ENCODE measurements at regions of chr16 and their contacts with region 1.

Region 1: DNA sequence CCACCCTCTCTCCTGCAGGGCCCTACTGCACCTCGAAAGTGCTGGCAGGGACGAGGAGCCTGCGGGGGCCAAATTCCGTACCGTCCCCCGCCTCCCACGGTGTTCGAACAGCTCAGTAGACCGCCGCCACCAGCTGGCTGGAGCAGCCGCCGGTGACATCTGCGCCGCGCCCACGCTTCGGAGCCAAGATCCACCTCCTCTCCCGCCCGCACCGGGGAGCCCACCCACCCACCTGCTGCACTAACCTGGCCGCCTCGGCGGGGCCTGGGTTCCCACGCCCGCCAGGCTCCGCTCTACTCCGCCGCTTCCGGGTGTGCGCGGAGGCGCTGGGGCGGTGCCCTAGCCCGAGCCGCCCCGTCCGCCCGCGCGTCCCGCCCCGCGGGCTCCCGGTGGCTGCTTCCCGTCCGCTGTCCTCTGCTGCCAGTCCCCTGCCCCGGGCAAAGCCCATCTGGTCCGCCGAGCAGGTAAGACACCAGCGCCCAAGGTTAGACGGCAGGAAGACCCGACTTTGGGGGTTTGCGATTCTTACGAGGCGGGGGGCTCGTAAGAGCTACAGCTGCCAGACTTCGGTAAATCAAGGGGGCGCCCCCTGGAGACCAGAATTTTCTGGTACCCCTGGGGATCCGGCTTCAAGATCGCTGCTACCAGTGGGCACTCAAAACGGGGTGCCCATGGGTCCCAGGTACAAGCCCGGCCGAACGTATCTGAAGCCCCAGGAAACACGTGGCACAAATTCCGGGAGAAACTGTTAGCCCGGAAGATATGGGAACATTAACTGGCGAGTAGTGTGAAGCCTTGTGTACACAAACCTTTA is at the starts of genes FBXL8 and TRADD:
- DNase-seq: peak; percentile 53 to 90 (median 76)
- ATAC-seq: peak; percentile 69
- H3K4me3 ChIP-seq: peak within 1 kb of the TSS; percentile 94 to 97
- H3K4me3 Mint-ChIP-seq: peak within 1 kb of the TSS; percentile 89
- H3K27ac ChIP-seq: peak within 1 kb of the TSS; percentile 74 to 93
- H3K27ac Mint-ChIP-seq: peak within 1 kb of the TSS; percentile 95
- H3K4me1 ChIP-seq: peaks cover 72% of the 10 kb centered on the region
- H3K4me1 Mint-ChIP-seq: peaks cover 60% of the 10 kb centered on the region
- H3K27me3 ChIP-seq: peaks cover 13 to 33% of the 10 kb centered on the region in 2 experiments
- H3K27me3 Mint-ChIP-seq: peaks cover 20% of the 10 kb centered on the region
- CTCF ChIP-seq: peak; percentile 60
- total RNA-seq, gene FBXL8: 4.4 to 6.4 TPM
- total RNA-seq, gene TRADD: 15.5 to 17.1 TPM

Region 2: GRCh38 chr16:66954097-66954659 is 205.6 kb before region 1 on chr16:
- CTCF ChIA-PET with region 1: interaction called, 8 read pairs
- POLR2A ChIA-PET with region 1: no interaction called
- intact Hi-C with region 1: loop called (anchors 1 to 2 kb)
- DNase-seq: peak; percentile 56 to 81 (median 74)
- ATAC-seq: peak; percentile 91
- H3K4me3 ChIP-seq: no peak overlapping the region
- H3K4me3 Mint-ChIP-seq: no peak overlapping the region
- H3K27ac ChIP-seq: no peak overlapping the region
- H3K27ac Mint-ChIP-seq: no peak overlapping the region
- H3K4me1 ChIP-seq: peaks cover under 1% of the 10 kb centered on the region
- H3K4me1 Mint-ChIP-seq: peaks cover 6% of the 10 kb centered on the region
- H3K27me3 ChIP-seq: peaks cover 2 to 7% of the 10 kb centered on the region in 2 experiments
- H3K27me3 Mint-ChIP-seq: peaks cover 37% of the 10 kb centered on the region
- CTCF ChIP-seq: peak; percentile 85

Region 3: DNA sequence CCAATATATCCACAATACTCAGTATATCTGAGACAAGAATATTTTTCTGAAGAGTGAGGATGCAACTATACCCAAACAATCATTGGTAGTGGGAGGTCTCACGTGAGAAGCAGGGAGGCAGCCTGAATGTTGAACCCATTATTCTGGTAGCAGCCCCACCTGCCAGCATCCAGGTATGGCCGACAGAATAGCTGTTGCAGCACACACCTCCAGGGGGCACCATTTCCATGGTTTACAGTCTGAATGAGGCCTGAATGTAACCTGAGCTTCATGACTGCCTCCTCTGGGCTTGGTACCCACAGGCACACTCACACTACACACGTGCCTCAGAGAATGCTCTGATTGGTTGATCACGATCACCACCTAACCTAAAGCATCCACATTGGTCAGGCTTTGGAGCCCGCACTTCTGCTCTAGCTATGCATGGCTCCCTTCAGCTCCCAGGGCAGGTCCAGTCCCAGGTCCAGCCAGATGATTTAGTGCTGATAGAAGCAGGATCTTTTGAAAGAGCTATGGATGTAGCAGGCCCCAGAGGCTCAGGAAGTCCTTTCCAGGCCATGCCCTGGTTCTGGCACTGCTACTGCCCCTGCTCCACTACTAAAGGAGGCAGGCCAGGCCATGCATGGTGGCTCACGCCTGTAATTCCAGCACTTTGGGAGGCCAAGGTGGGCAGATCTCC is 141.9 kb before region 1 on chr16:
- CTCF ChIA-PET with region 1: interaction called, 78 read pairs
- POLR2A ChIA-PET with region 1: interaction called, 6 read pairs
- intact Hi-C with region 1: loop called (anchors 1 kb)
- DNase-seq: peak; percentile 67 to 89 (median 85)
- ATAC-seq: peak; percentile 89
- H3K4me3 ChIP-seq: no peak overlapping the region
- H3K4me3 Mint-ChIP-seq: no peak overlapping the region
- H3K27ac ChIP-seq: no peak overlapping the region
- H3K27ac Mint-ChIP-seq: no peak overlapping the region
- H3K4me1 ChIP-seq: peaks cover 15% of the 10 kb centered on the region
- H3K4me1 Mint-ChIP-seq: no peaks in the 10 kb centered on the region
- H3K27me3 ChIP-seq: peaks cover 0 to 18% of the 10 kb centered on the region in 2 experiments
- H3K27me3 Mint-ChIP-seq: no peaks in the 10 kb centered on the region
- CTCF ChIP-seq: peak; percentile 63

Region 4: GRCh38 chr16:67115639-67116038 is 44.2 kb before region 1 on chr16:
- CTCF ChIA-PET with region 1: interaction called, 13 read pairs
- POLR2A ChIA-PET with region 1: no interaction called
- intact Hi-C with region 1: no loop called
- DNase-seq: peak in 1 of 9 experiments; percentile 17
- ATAC-seq: no peak
- H3K4me3 ChIP-seq: no peak overlapping the region
- H3K4me3 Mint-ChIP-seq: no peak overlapping the region
- H3K27ac ChIP-seq: no peak overlapping the region
- H3K27ac Mint-ChIP-seq: peak overlapping the region; percentile 10
- H3K4me1 ChIP-seq: peaks cover 9% of the 10 kb centered on the region
- H3K4me1 Mint-ChIP-seq: peaks cover 40% of the 10 kb centered on the region
- H3K27me3 ChIP-seq: no peaks in the 10 kb centered on the region
- H3K27me3 Mint-ChIP-seq: no peaks in the 10 kb centered on the region
- CTCF ChIP-seq: no peak

Region 5: GRCh38 chr16:67173808-67174705 is 14.3 kb after region 1 on chr16:
- CTCF ChIA-PET with region 1: interaction called, 20 read pairs
- POLR2A ChIA-PET with region 1: interaction called, 11 read pairs
- intact Hi-C with region 1: loop called in 1 of 2 experiments (anchors 1 kb)
- DNase-seq: peak in 8 of 9 experiments; percentile 41 to 82 (median 64)
- ATAC-seq: peak; percentile 75
- H3K4me3 ChIP-seq: peak overlapping the region; percentile 46 to 51
- H3K4me3 Mint-ChIP-seq: peak overlapping the region; percentile 76
- H3K27ac ChIP-seq: peak overlapping the region in 1 of 2 experiments; percentile 18
- H3K27ac Mint-ChIP-seq: no peak overlapping the region
- H3K4me1 ChIP-seq: peaks cover 35% of the 10 kb centered on the region
- H3K4me1 Mint-ChIP-seq: peaks cover 39% of the 10 kb centered on the region
- H3K27me3 ChIP-seq: peaks cover 10 to 19% of the 10 kb centered on the region in 2 experiments
- H3K27me3 Mint-ChIP-seq: peaks cover 59% of the 10 kb centered on the region
- CTCF ChIP-seq: peak; percentile 15

Region 6: GRCh38 chr16:67246934-67247697 is 87.3 kb after region 1 on chr16 and contains the start of gene FHOD1:
- CTCF ChIA-PET with region 1: interaction called, 3 read pairs
- POLR2A ChIA-PET with region 1: no interaction called
- intact Hi-C with region 1: loop called in 1 of 2 experiments (anchors 1 kb)
- DNase-seq: peak; percentile 86 to 98 (median 96)
- ATAC-seq: peak; percentile 70
- H3K4me3 ChIP-seq: peak within 1 kb of the TSS; percentile 81 to 92
- H3K4me3 Mint-ChIP-seq: peak within 1 kb of the TSS; percentile 88
- H3K27ac ChIP-seq: peak within 1 kb of the TSS; percentile 44 to 86
- H3K27ac Mint-ChIP-seq: peak within 1 kb of the TSS; percentile 82
- H3K4me1 ChIP-seq: peaks cover 47% of the 10 kb centered on the region
- H3K4me1 Mint-ChIP-seq: peaks cover 51% of the 10 kb centered on the region
- H3K27me3 ChIP-seq: peaks cover 0 to 3% of the 10 kb centered on the region in 2 experiments
- H3K27me3 Mint-ChIP-seq: peaks cover 3% of the 10 kb centered on the region
- CTCF ChIP-seq: no peak
- total RNA-seq, gene FHOD1: 15.2 to 18.7 TPM

Region 7: DNA sequence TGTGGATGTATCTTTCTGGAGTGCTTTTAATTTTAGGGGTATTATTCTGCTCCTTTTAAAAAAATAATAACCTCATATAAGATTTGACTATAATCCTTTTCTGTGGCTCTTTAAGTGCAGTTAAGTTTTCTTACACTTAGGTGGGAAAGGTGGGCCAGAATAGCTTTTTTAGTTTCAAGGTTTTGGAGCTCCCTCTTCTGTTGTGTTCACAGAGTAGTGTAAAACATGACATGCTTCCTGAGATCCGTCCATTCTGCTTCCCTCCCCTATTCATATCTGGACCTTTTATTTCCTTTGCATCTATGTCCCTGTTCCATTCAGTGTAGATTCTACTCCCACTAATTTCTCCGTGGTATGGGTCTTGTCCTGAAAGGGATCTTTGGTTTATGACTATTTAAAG is 179.7 kb after region 1 on chr16:
- CTCF ChIA-PET with region 1: no interaction called
- POLR2A ChIA-PET with region 1: no interaction called
- intact Hi-C with region 1: no loop called
- DNase-seq: peak in 2 of 9 experiments; percentile 7 to 24
- ATAC-seq: no peak
- H3K4me3 ChIP-seq: no peak overlapping the region
- H3K4me3 Mint-ChIP-seq: no peak overlapping the region
- H3K27ac ChIP-seq: no peak overlapping the region
- H3K27ac Mint-ChIP-seq: no peak overlapping the region
- H3K4me1 ChIP-seq: no peaks in the 10 kb centered on the region
- H3K4me1 Mint-ChIP-seq: no peaks in the 10 kb centered on the region
- H3K27me3 ChIP-seq: peaks cover 0 to 5% of the 10 kb centered on the region in 2 experiments
- H3K27me3 Mint-ChIP-seq: peaks cover 7% of the 10 kb centered on the region
- CTCF ChIP-seq: no peak

Measured in CD8-positive, alpha-beta T cell (primary cell).